H1 (cell line): ENCODE measurements at regions of chr9 and their contacts with region 1.

Region 1: DNA sequence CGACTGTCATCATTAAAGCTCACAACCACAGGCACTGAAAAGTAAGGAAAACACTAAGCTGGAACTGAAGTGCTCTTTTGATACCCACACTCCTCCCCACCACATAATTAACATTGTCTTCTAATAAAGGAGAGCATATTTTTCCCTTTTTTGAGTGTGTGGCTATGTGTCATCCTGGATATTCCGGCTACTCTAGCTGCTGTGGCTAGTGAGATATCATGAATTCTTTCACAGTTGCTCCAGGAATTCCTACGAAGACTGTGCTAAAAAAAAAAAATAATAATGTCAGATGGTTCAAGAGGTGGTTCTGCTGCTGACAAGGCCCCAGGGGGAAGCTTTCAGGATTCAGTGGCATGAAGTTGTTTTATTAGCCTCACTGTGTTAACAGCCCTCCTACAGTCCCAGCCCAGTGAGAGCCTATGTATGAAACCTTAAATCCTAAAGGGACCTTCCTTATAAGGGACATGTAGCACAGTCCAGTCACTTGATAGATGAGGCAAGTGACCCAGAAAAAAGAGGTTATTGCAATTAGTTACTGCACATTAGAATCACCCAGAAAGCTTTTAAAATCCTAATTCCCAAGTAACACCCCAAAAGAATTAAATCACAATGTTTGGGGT is 46.6 kb downstream of the TMEM252 start:
- DNase-seq: no peak
- H3K4me3 ChIP-seq: no peak overlapping the region
- H3K27ac ChIP-seq: no peak overlapping the region
- H3K4me1 ChIP-seq: no peaks in the 10 kb centered on the region
- H3K27me3 ChIP-seq: peaks cover 0 to 8% (median 2%) of the 10 kb centered on the region in 4 experiments; a peak in 4 of 7 replicates
- CTCF ChIP-seq: no peak
- EP300 ChIP-seq: no peak
- POLR2A ChIP-seq: no peak
- RAD21 ChIP-seq: no peak

Region 2: GRCh38 chr9:68507130-68507805 is 13.2 kb after region 1 on chr9:
- CTCF ChIA-PET with region 1: interaction called, 25 read pairs
- POLR2A ChIA-PET with region 1: no interaction called
- DNase-seq: no peak
- H3K4me3 ChIP-seq: no peak overlapping the region
- H3K27ac ChIP-seq: no peak overlapping the region
- H3K4me1 ChIP-seq: no peaks in the 10 kb centered on the region
- H3K27me3 ChIP-seq: peaks cover 44 to 89% (median 77%) of the 10 kb centered on the region in 4 experiments
- CTCF ChIP-seq: peak in 2 of 3 experiments; percentile 15 to 37; a peak in 2 of 4 replicates
- EP300 ChIP-seq: no peak
- POLR2A ChIP-seq: no peak
- RAD21 ChIP-seq: peak; percentile 59 to 60